ENCODE measurements at regions of chr11 and their contacts with region 1.

Region 1: GRCh38 chr11:8006349-8006977 is 19.3 kb downstream of the EIF3F start:
- DNase-seq: peak; percentile 63
- H3K4me3 Mint-ChIP-seq: no peak overlapping the region
- H3K27ac Mint-ChIP-seq: no peak overlapping the region
- H3K4me1 Mint-ChIP-seq: no peaks in the 10 kb centered on the region
- H3K27me3 Mint-ChIP-seq: no peaks in the 10 kb centered on the region

Region 2: DNA sequence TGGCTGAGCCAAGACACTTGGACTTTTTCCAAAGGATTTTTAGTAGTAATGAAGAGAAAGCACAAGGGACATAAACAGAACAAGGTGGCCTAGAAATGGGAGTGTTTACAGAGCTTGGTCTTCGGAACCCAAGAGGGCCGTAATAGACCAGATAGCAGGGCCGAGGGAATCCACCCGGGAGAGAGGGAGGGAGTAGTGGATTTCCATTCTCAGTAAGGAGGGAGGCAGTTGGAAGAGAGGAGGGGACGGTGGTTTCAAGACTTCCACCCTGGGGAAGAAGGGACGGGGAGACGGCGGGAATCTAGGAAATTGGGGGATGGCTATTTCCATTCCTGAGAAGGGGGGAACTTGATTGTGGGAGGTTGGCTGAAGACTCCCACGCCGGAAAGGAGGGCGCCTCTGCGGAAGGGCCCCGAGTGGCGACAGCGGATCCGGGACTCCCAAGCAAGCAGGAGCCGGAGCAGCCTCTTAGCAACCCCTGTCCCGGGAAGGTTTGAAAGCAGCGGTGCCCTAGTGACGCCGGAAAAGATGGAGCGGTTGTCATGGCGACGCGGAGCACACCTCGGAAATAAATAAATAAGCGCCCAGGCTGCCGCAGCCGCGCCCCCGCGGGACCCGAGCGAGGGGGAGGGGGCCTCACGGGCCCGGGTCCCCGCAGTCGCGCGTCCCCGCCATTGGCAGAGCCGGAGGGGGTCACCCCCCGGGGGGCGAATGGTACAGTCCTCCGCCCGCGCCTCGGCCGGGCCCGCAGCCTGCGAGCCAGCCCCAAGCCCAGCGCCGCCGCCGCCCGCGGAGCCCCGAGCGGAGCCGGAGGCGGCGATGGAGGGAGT is 12.2 kb after region 1 on chr11:
- CTCF ChIA-PET with region 1: interaction called, 28 read pairs
- intact Hi-C with region 1: no loop called
- DNase-seq: peak; percentile 73
- H3K4me3 Mint-ChIP-seq: peak overlapping the region; percentile 48
- H3K27ac Mint-ChIP-seq: no peak overlapping the region
- H3K4me1 Mint-ChIP-seq: peaks cover 12% of the 10 kb centered on the region
- H3K27me3 Mint-ChIP-seq: peaks cover 41% of the 10 kb centered on the region

Region 3: DNA sequence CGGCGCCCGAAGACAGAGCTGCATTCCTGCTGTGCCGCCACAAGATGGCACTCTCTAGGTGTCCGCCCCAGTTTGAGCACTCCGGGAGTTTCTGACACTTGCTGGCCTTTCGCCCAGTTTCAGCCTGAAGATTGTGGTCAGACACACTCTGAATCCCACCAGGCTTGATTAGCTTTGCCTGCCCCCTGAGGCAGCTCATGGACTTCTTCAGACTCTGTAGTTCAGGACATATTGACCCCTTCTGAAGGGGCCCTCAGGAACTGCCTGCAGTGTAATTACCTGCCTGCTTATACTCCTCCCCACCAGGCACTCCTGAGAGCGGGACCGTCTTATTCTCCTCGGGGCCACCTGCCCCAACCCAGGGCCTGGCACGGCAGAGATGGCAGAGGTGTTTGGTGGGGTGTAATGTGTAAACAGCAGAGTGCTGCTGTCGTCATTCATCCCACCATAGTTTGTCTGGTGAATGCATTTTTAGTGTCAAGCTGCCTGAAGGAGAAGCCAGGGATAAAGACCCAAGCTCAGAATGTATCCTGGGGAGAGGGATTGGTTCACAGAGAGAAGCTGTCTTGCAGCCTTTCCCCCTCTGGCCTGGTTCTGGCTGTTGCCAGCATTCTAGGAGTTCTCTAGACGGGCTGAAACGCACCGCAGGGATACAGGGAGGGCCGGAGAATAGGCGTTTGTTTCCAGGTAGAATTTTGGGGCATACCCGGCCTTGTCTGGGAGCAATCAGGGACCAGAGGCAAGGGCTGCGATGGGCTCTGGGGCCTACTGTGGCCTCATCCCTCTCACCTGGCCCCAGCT is 27.0 kb after region 1 on chr11:
- CTCF ChIA-PET with region 1: interaction called, 29 read pairs
- intact Hi-C with region 1: loop called (anchors 2 kb)
- DNase-seq: peak; percentile 62
- H3K4me3 Mint-ChIP-seq: no peak overlapping the region
- H3K27ac Mint-ChIP-seq: no peak overlapping the region
- H3K4me1 Mint-ChIP-seq: peaks cover 4% of the 10 kb centered on the region
- H3K27me3 Mint-ChIP-seq: peaks cover 30% of the 10 kb centered on the region

Region 4: DNA sequence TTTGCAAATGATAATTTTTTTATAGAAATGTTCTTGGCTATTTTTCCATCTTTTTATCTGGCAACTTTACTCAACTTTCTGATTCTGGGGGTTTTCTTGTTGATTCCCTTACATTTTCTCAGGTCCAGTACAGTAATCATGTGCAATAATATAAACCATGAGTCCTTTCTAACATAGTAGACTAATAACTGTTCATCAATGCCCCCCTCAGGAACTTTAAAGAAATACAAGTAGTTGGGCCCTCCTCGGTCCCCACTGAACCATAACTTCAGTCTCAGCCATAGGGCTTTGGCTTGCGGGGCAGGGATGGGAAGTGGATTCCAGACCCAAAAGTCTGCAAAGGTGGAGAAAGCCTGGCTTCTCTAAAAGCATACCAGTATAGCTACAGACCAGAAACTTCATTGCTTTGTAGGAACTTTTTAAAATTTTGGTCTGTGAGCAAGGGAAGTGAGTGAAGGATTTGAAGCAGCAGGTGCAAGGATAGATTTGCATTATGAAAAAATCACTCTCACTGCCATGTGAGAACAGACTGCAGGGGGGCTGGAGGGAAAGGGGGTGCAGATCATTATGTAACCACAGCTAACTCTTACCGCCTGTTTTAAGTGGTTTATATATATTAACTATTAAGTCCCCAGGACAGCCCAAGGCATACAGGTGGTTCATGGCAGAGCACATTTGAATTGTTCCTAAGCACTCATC is 64.1 kb after region 1 on chr11:
- CTCF ChIA-PET with region 1: interaction called, 4 read pairs
- intact Hi-C with region 1: loop called (anchors 1 kb)
- DNase-seq: no peak
- H3K4me3 Mint-ChIP-seq: no peak overlapping the region
- H3K27ac Mint-ChIP-seq: no peak overlapping the region
- H3K4me1 Mint-ChIP-seq: peaks cover 8% of the 10 kb centered on the region
- H3K27me3 Mint-ChIP-seq: peaks cover 26% of the 10 kb centered on the region

Region 5: GRCh38 chr11:8087185-8087584 is 80.7 kb after region 1 on chr11:
- CTCF ChIA-PET with region 1: interaction called, 90 read pairs
- intact Hi-C with region 1: loop called (anchors 1 kb)
- DNase-seq: peak; percentile 15
- H3K4me3 Mint-ChIP-seq: no peak overlapping the region
- H3K27ac Mint-ChIP-seq: no peak overlapping the region
- H3K4me1 Mint-ChIP-seq: no peaks in the 10 kb centered on the region
- H3K27me3 Mint-ChIP-seq: peaks cover 23% of the 10 kb centered on the region

Region 6: GRCh38 chr11:8092587-8093424 is 86.3 kb after region 1 on chr11:
- CTCF ChIA-PET with region 1: interaction called, 90 read pairs
- intact Hi-C with region 1: loop called (anchors 1 kb)
- DNase-seq: peak; percentile 69
- H3K4me3 Mint-ChIP-seq: no peak overlapping the region
- H3K27ac Mint-ChIP-seq: no peak overlapping the region
- H3K4me1 Mint-ChIP-seq: peaks cover 2% of the 10 kb centered on the region
- H3K27me3 Mint-ChIP-seq: no peaks in the 10 kb centered on the region

Region 7: GRCh38 chr11:8566613-8567210 is 560.2 kb after region 1 on chr11:
- CTCF ChIA-PET with region 1: no interaction called
- intact Hi-C with region 1: loop called (anchors 5 kb)
- DNase-seq: no peak
- H3K4me3 Mint-ChIP-seq: no peak overlapping the region
- H3K27ac Mint-ChIP-seq: no peak overlapping the region
- H3K4me1 Mint-ChIP-seq: peaks cover 5% of the 10 kb centered on the region
- H3K27me3 Mint-ChIP-seq: peaks cover 21% of the 10 kb centered on the region

Measured in activated naive CD4-positive, alpha-beta T cell treated with anti-CD3 and anti-CD28 coated beads for 36 hours (primary cell).